Sigmoid colon (tissue), 7 donors: ENCODE measurements at regions of chr15 and their contacts with region 1.

Region 1: GRCh38 chr15:52326756-52327155 is 31.2 kb upstream of the MYO5C start:
- DNase-seq: no peak
- H3K4me3 ChIP-seq: no peak overlapping the region
- H3K27ac ChIP-seq: no peak overlapping the region
- H3K4me1 ChIP-seq: no peaks in the 10 kb centered on the region
- H3K27me3 ChIP-seq: no peaks in the 10 kb centered on the region
- CTCF ChIP-seq: no peak
- EP300 ChIP-seq: no peak
- POLR2A ChIP-seq: no peak

Region 2: GRCh38 chr15:51801391-51801835 is 525.3 kb before region 1 on chr15:
- intact Hi-C with region 1: no loop called
- DNase-seq: no peak
- H3K4me3 ChIP-seq: no peak overlapping the region
- H3K27ac ChIP-seq: no peak overlapping the region
- H3K4me1 ChIP-seq: no peaks in the 10 kb centered on the region
- H3K27me3 ChIP-seq: no peaks in the 10 kb centered on the region
- CTCF ChIP-seq: peak in 1 of 4 experiments; percentile 14
- EP300 ChIP-seq: no peak
- POLR2A ChIP-seq: no peak

Region 3: GRCh38 chr15:52256366-52256765 is 70.4 kb before region 1 on chr15:
- intact Hi-C with region 1: loop called (anchors 5 kb)
- DNase-seq: peak; percentile 82
- H3K4me3 ChIP-seq: no peak overlapping the region
- H3K27ac ChIP-seq: no peak overlapping the region
- H3K4me1 ChIP-seq: peaks cover 0 to 2% (median 1%) of the 10 kb centered on the region in 4 donors
- H3K27me3 ChIP-seq: no peaks in the 10 kb centered on the region
- CTCF ChIP-seq: peak; percentile 26 to 85 (median 74)
- EP300 ChIP-seq: no peak
- POLR2A ChIP-seq: no peak